ENCODE measurements at regions of chr4 and their contacts with region 1.

Region 1: DNA sequence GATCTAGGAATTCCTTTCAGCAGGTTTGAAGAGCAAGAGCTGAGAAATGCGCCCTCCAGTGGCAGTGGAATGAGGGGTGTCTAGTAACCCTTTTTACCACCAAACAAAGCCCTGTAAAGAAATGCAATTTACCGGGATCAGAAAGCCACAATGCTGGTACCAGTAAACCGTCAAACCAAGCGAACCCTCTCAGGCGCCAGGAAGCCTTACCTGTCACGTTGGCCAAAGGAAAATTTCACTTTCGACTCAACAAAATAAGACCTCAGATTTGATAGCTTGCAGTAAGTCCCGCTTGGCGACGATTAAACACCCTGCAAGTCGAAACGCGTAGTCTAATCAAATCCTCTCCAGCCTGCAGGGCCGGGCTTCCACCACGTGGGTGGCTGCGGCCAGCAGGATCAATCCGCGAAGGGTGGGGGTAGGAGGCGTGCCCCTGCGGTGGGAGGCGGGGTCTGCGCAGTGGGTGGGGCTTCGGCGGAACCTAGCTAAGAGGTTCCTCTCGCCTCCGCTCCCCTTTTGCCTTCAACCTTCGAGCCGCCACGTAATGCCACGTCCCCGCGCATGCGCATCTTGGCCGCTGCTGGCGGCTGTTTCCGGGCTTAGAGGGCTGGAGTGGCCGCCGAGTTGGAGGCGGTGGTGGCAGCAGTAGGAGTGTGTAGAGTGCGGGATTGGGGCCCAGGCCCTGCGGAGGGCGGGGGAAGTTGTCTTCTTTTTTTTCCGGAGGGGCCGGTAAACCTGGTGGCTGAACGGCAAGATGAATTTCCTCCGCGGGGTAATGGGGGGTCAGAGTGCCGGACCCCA is at the start of gene USO1:
- DNase-seq: peak; percentile 99 to 100
- ATAC-seq: peak; percentile 93 to 99 (median 93)
- H3K4me3 ChIP-seq: peak within 1 kb of the TSS; percentile 97
- H3K4me3 Mint-ChIP-seq: peak within 1 kb of the TSS; percentile 99
- H3K27ac ChIP-seq: peak within 1 kb of the TSS; percentile 97
- H3K27ac Mint-ChIP-seq: peak within 1 kb of the TSS; percentile 98 to 100
- H3K4me1 ChIP-seq: peaks cover 20% of the 10 kb centered on the region
- H3K4me1 Mint-ChIP-seq: peaks cover 46 to 49% of the 10 kb centered on the region in 2 donors
- H3K27me3 ChIP-seq: no peaks in the 10 kb centered on the region
- H3K27me3 Mint-ChIP-seq: no peaks in the 10 kb centered on the region
- CTCF ChIP-seq: peak; percentile 85
- total RNA-seq, gene USO1: 29.7 to 38.4 (median 32.2) TPM

Region 2: DNA sequence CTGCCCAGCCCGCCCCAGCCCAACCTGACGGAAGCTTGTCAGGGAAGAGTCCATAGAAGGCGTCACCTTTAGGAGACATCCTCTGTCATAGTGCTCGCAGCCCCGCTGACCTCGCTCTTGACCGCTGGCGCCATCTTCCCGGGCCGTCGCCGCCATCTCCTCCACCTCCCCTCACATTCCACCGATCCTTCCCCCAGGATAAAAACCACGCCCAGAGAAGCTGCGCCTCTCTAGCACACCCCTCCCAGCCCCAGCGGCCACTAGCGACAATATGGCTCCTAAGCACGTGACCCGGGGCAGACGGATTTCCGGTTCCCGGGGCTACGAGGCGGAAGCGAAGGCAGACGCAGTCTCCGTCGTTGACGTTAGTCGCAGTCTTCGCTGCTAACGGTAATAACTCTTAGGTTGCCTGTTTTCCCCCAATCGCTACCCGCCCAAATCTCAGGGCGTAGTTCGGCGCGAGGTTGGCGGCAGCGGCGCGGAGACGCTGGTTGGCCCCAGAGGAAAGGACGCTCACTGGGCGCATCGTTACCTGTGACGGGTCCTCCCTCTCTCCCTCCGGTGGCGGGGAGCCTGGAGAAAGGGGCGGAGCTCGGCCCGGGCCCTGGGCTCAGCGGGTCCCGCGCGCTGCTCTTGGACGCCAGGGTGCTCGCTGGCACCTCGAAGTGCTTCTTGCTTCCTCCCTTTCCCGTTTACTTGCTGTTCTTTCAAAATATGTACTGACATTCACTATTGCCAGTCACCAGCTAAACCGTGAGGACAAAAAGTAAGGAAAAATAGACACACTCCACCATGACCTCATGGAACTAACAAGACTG is 209.9 kb before region 1 on chr4 and contains the starts of genes RCHY1 and THAP6:
- intact Hi-C with region 1: loop called (anchors 2 kb)
- DNase-seq: peak; percentile 89 to 97
- ATAC-seq: peak; percentile 80 to 91 (median 87)
- H3K4me3 ChIP-seq: peak within 1 kb of the TSS; percentile 95
- H3K4me3 Mint-ChIP-seq: no peak within 1 kb of the TSS
- H3K27ac ChIP-seq: peak within 1 kb of the TSS; percentile 98
- H3K27ac Mint-ChIP-seq: no peak within 1 kb of the TSS
- H3K4me1 ChIP-seq: peaks cover 20% of the 10 kb centered on the region
- H3K4me1 Mint-ChIP-seq: peaks cover 7 to 37% of the 10 kb centered on the region in 2 donors
- H3K27me3 ChIP-seq: no peaks in the 10 kb centered on the region
- H3K27me3 Mint-ChIP-seq: no peaks in the 10 kb centered on the region
- CTCF ChIP-seq: no peak
- total RNA-seq, gene RCHY1: 38.7 to 52.4 (median 45.3) TPM
- total RNA-seq, gene THAP6: 20.2 to 24.1 (median 21.8) TPM

Region 3: GRCh38 chr4:75630174-75630936 is 93.9 kb before region 1 on chr4 and contains the start of gene CDKL2:
- intact Hi-C with region 1: loop called (anchors 1 kb)
- DNase-seq: peak; percentile 88 to 96
- ATAC-seq: peak; percentile 98 to 99 (median 99)
- H3K4me3 ChIP-seq: peak within 1 kb of the TSS; percentile 48
- H3K4me3 Mint-ChIP-seq: peak within 1 kb of the TSS; percentile 95
- H3K27ac ChIP-seq: no peak within 1 kb of the TSS
- H3K27ac Mint-ChIP-seq: peak within 1 kb of the TSS; percentile 68 to 81
- H3K4me1 ChIP-seq: peaks cover 12% of the 10 kb centered on the region
- H3K4me1 Mint-ChIP-seq: peaks cover 7 to 12% of the 10 kb centered on the region in 2 donors
- H3K27me3 ChIP-seq: no peaks in the 10 kb centered on the region
- H3K27me3 Mint-ChIP-seq: peaks cover 0 to 8% of the 10 kb centered on the region in 2 donors
- CTCF ChIP-seq: no peak
- total RNA-seq, gene CDKL2: 0.19 to 0.63 (median 0.32) TPM

Region 4: GRCh38 chr4:75673027-75673958 is 51.0 kb before region 1 on chr4 and contains the start of gene G3BP2:
- intact Hi-C with region 1: loop called (anchors 1 kb)
- DNase-seq: peak; percentile 92 to 100
- ATAC-seq: peak; percentile 92 to 98 (median 94)
- H3K4me3 ChIP-seq: peak within 1 kb of the TSS; percentile 74
- H3K4me3 Mint-ChIP-seq: peak within 1 kb of the TSS; percentile 98
- H3K27ac ChIP-seq: peak within 1 kb of the TSS; percentile 94
- H3K27ac Mint-ChIP-seq: peak within 1 kb of the TSS; percentile 98 to 99
- H3K4me1 ChIP-seq: peaks cover 6% of the 10 kb centered on the region
- H3K4me1 Mint-ChIP-seq: peaks cover 48 to 54% of the 10 kb centered on the region in 2 donors
- H3K27me3 ChIP-seq: no peaks in the 10 kb centered on the region
- H3K27me3 Mint-ChIP-seq: no peaks in the 10 kb centered on the region
- CTCF ChIP-seq: no peak
- total RNA-seq, gene G3BP2: 204 to 233 (median 214) TPM

Region 5: GRCh38 chr4:75686346-75686745 is 37.9 kb before region 1 on chr4:
- intact Hi-C with region 1: loop called (anchors 5 kb)
- DNase-seq: peak in 1 of 2 donors; percentile 65
- ATAC-seq: peak; percentile 77 to 90 (median 90)
- H3K4me3 ChIP-seq: no peak overlapping the region
- H3K4me3 Mint-ChIP-seq: peak overlapping the region; percentile 62
- H3K27ac ChIP-seq: peak overlapping the region; percentile 60
- H3K27ac Mint-ChIP-seq: peak overlapping the region; percentile 57 to 69
- H3K4me1 ChIP-seq: peaks cover 27% of the 10 kb centered on the region
- H3K4me1 Mint-ChIP-seq: peaks cover 26 to 36% of the 10 kb centered on the region in 2 donors
- H3K27me3 ChIP-seq: no peaks in the 10 kb centered on the region
- H3K27me3 Mint-ChIP-seq: no peaks in the 10 kb centered on the region
- CTCF ChIP-seq: no peak

Region 6: DNA sequence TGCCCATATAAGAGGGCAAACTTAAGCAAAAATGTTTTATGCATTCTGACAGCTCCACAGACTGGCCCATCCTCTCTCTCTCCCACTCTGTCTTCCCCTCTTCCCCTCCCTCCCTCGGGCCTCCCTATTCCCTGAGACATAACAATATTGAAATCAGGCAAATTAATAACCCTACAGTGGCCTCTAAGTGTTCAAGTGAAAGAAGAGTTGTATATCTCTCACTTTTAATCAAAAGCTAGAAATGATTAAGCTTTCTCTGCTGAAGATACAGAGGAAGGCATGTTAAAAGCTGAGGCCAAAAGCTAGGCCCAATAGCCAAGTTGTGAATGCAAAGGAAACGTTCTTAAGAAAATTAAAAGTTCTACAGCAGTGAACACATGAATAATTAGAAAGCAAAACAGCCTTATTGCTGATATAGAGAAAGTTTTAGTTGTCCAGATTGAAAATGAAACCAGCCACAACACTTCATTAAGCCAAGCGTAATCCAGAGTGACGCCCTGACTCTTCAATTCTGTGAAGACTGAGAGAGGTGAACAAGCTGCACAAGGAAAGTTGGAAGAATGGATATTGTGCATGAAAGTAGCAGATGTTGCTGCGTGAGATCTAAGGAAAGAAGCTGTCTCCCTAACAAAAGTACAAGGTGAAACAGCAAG is 55.0 kb after region 1 on chr4:
- intact Hi-C with region 1: no loop called
- DNase-seq: no peak
- ATAC-seq: no peak
- H3K4me3 ChIP-seq: no peak overlapping the region
- H3K4me3 Mint-ChIP-seq: no peak overlapping the region
- H3K27ac ChIP-seq: no peak overlapping the region
- H3K27ac Mint-ChIP-seq: peak overlapping the region in 1 of 2 donors; percentile 16
- H3K4me1 ChIP-seq: no peaks in the 10 kb centered on the region
- H3K4me1 Mint-ChIP-seq: peaks cover 0 to 4% of the 10 kb centered on the region in 2 donors
- H3K27me3 ChIP-seq: no peaks in the 10 kb centered on the region
- H3K27me3 Mint-ChIP-seq: no peaks in the 10 kb centered on the region
- CTCF ChIP-seq: no peak

Region 7: GRCh38 chr4:75989846-75990528 is 265.7 kb after region 1 on chr4:
- intact Hi-C with region 1: loop called (anchors 5 kb)
- DNase-seq: peak in 1 of 2 donors; percentile 25
- ATAC-seq: no peak
- H3K4me3 ChIP-seq: peak overlapping the region; percentile 91
- H3K4me3 Mint-ChIP-seq: peak overlapping the region; percentile 92
- H3K27ac ChIP-seq: peak overlapping the region; percentile 27
- H3K27ac Mint-ChIP-seq: peak overlapping the region; percentile 78 to 80
- H3K4me1 ChIP-seq: peaks cover 13% of the 10 kb centered on the region
- H3K4me1 Mint-ChIP-seq: peaks cover 24 to 28% of the 10 kb centered on the region in 2 donors
- H3K27me3 ChIP-seq: no peaks in the 10 kb centered on the region
- H3K27me3 Mint-ChIP-seq: peaks cover 2 to 7% of the 10 kb centered on the region in 2 donors
- CTCF ChIP-seq: no peak